Ascending aorta (tissue), 2 donors: ENCODE measurements at regions of chr11 and their contacts with region 1.

Region 1: GRCh38 chr11:15650105-15650938 is 535.6 kb downstream of the INSC start:
- DNase-seq: peak; percentile 53 to 96
- H3K4me3 ChIP-seq: peak overlapping the region; percentile 59
- H3K27ac ChIP-seq: peak overlapping the region; percentile 39 to 51
- H3K4me1 ChIP-seq: peaks cover 0 to 3% of the 10 kb centered on the region in 2 donors
- H3K27me3 ChIP-seq: no peaks in the 10 kb centered on the region
- CTCF ChIP-seq: peak; percentile 94 to 99 (median 99)

Region 2: GRCh38 chr11:15688351-15688792 is 38.0 kb after region 1 on chr11:
- intact Hi-C with region 1: no loop called
- DNase-seq: no peak
- H3K4me3 ChIP-seq: no peak overlapping the region
- H3K27ac ChIP-seq: no peak overlapping the region
- H3K4me1 ChIP-seq: no peaks in the 10 kb centered on the region
- H3K27me3 ChIP-seq: no peaks in the 10 kb centered on the region
- CTCF ChIP-seq: no peak

Region 3: DNA sequence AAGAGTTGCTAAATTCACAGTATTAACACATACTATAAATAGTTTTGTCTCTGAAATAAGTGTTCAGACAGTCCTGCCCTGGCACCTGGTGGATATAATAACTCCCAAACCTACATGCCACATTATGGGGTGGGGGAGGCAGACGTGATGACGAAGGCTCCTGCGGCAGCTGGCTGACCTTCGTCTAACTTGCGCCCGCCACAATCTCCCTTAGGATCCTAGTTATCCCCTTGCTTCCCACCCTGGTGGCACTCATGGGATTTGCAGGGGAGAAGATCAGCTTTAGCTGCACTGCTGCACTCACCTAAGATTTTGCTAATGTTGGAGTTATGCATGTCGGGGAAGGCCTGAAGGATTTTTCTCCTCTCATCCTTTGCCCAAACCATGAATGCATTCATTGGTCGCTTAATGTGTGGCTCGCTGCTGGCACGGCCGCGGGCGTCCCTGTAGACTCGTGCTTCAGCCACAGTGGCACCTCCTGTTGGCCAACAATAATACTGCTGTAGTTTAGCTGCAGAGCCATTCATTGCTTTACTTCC is 338.4 kb after region 1 on chr11:
- intact Hi-C with region 1: loop called (anchors 5 kb)
- DNase-seq: no peak
- H3K4me3 ChIP-seq: no peak overlapping the region
- H3K27ac ChIP-seq: no peak overlapping the region
- H3K4me1 ChIP-seq: no peaks in the 10 kb centered on the region
- H3K27me3 ChIP-seq: no peaks in the 10 kb centered on the region
- CTCF ChIP-seq: peak; percentile 4 to 34 (median 9)

Region 4: GRCh38 chr11:16605894-16606783 is 955.8 kb after region 1 on chr11:
- intact Hi-C with region 1: loop called (anchors 2 kb)
- DNase-seq: peak in 1 of 2 donors; percentile 94
- H3K4me3 ChIP-seq: peak overlapping the region; percentile 73 to 75
- H3K27ac ChIP-seq: peak overlapping the region; percentile 63
- H3K4me1 ChIP-seq: peaks cover 7 to 18% of the 10 kb centered on the region in 2 donors
- H3K27me3 ChIP-seq: peaks cover 15% of the 10 kb centered on the region
- CTCF ChIP-seq: peak; percentile 79 to 95 (median 95)